Mammary epithelial cell (primary cell): ENCODE measurements at regions of chr1 and their contacts with region 1.

Region 1: GRCh38 chr1:93338421-93338820 is 7.3 kb upstream of the DR1 start:
- DNase-seq: peak; percentile 68
- H3K4me3 ChIP-seq: no peak overlapping the region
- H3K27ac ChIP-seq: peak overlapping the region; percentile 13
- H3K4me1 ChIP-seq: peaks cover 31% of the 10 kb centered on the region
- H3K27me3 ChIP-seq: no peaks in the 10 kb centered on the region
- CTCF ChIP-seq: no peak

Region 2: GRCh38 chr1:93324486-93325464 is 13.6 kb before region 1 on chr1:
- CTCF ChIA-PET with region 1: no interaction called
- dilution Hi-C with region 1: no loop called
- in situ Hi-C with region 1: no loop called
- intact Hi-C with region 1: loop called (anchors 2 kb)
- DNase-seq: peak; percentile 88
- H3K4me3 ChIP-seq: peak overlapping the region; percentile 1 to 34 (median 31)
- H3K27ac ChIP-seq: peak overlapping the region; percentile 86
- H3K4me1 ChIP-seq: peaks cover 27% of the 10 kb centered on the region
- H3K27me3 ChIP-seq: no peaks in the 10 kb centered on the region
- CTCF ChIP-seq: no peak